ENCODE measurements at regions of chr2 and their contacts with region 1.

Region 1: GRCh38 chr2:76415821-76416220 is 705.1 kb upstream of the GCFC2 start:
- DNase-seq: no peak
- ATAC-seq: no peak
- H3K4me3 ChIP-seq: no peak overlapping the region
- H3K27ac ChIP-seq: no peak overlapping the region
- H3K4me1 ChIP-seq: no peaks in the 10 kb centered on the region
- H3K27me3 ChIP-seq: no peaks in the 10 kb centered on the region
- CTCF ChIP-seq: no peak

Region 2: DNA sequence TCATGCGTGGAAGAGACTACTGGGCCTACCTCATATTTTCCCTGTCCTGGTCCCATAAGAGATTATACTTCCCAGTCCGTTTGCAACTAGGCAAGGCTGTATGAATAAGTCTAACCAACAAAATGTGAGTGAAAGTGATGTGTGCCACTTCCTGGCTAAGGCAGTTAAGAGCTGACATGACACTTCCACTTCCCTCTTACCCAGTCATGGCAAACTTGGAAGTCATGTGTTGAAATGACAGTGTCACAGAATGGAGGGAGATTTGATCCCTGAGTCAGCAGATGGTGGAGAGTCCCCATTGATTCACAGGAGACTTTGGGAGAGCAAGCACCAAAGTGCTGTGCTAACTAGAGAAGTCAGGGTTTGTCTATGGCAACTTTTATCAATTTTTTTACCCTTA is 1252.9 kb before region 1 on chr2:
- intact Hi-C with region 1: no loop called
- DNase-seq: no peak
- ATAC-seq: peak; percentile 35
- H3K4me3 ChIP-seq: no peak overlapping the region
- H3K27ac ChIP-seq: no peak overlapping the region
- H3K4me1 ChIP-seq: no peaks in the 10 kb centered on the region
- H3K27me3 ChIP-seq: no peaks in the 10 kb centered on the region
- CTCF ChIP-seq: no peak

Region 3: GRCh38 chr2:76204048-76204447 is 211.8 kb before region 1 on chr2:
- intact Hi-C with region 1: loop called in 1 of 2 experiments (anchors 10 kb)
- DNase-seq: no peak
- ATAC-seq: no peak
- H3K4me3 ChIP-seq: no peak overlapping the region
- H3K27ac ChIP-seq: no peak overlapping the region
- H3K4me1 ChIP-seq: no peaks in the 10 kb centered on the region
- H3K27me3 ChIP-seq: no peaks in the 10 kb centered on the region
- CTCF ChIP-seq: no peak